ENCODE measurements at regions of chr7 and their contacts with region 1.

Region 1: DNA sequence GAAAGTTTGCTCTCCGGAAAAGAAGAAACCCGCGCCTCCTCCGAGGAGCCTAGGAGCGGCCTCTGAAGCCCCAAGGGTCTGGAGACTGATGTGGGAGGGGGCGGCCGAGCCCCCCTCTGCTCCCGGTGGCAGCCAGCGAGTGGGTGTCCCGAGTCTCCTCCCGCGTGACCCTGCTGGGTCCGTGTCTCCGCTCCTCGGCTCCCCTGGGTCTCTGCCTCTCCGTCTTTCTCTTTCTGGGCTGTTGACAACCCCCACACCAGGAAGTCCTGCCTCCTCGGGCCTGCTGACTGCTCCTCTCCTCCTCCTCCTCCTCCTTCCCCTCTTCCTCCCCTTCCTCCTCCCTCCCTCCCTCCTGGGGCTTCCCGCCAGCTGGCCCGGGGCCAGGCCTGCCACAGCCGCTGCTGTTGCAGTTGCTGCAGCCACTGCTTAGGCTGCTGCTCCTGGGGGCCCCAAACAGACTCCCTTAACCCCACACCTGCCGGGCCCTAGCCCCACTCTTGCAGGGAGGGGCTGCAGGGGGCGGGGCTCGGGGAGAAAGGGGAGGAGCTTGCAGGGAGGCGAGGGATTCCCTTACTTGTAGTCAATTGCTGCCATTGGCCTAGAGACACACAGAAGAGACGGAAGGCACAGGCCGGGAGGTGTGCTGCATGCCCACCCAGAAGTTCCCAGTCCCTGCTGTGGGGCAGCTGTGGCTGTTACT is at the start of gene TSC22D4:
- DNase-seq: peak; percentile 92
- ATAC-seq: peak; percentile 70
- H3K4me3 ChIP-seq: peak within 1 kb of the TSS; percentile 90 to 99 (median 96)
- H3K4me3 Mint-ChIP-seq: peak within 1 kb of the TSS; percentile 97
- H3K27ac ChIP-seq: peak within 1 kb of the TSS; percentile 72 to 89
- H3K27ac Mint-ChIP-seq: peak within 1 kb of the TSS; percentile 91
- H3K4me1 ChIP-seq: peaks cover 34 to 51% of the 10 kb centered on the region in 2 donors
- H3K4me1 Mint-ChIP-seq: peaks cover 37% of the 10 kb centered on the region
- H3K27me3 ChIP-seq: no peaks in the 10 kb centered on the region
- H3K27me3 Mint-ChIP-seq: no peaks in the 10 kb centered on the region
- CTCF ChIP-seq: no peak
- total RNA-seq, gene TSC22D4: 92.8 and 95.0 TPM in 2 replicates

Region 2: DNA sequence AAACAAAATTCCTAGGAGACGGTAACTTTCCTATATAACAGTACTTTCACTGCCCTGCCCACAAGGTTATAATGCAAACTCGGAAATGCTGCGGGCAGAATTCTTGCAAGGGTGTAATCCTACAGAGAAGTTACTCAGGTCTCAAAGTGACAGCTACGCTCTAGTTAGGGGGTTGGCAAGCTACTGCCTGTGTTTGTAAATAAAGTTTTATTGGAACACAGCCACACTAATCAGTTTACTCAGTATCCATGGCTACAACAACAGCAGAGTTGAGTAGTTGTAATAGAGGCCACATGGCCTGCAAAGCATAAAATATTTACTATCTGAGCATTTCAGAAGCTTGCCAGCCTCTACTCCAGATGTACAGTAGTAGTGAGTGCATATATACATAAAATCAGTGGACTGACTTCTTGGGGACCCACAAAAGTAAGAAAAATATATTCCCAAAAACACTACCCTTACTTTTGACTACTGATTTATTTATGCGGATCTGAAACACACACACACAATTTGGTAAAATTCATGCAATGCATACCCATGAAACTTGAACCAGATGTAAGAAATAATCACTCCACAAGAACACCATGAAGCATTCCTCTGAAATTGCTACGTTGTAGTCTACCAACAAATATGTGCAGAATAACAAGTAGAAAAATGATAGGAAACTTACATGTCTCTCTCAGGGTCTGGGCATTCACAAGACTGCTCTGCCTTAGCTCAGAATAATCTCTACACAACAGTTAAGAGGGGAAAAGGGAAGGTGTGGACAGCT is 1388.2 kb before region 1 on chr7:
- CTCF ChIA-PET with region 1: no interaction called
- POLR2A ChIA-PET with region 1: no interaction called
- intact Hi-C with region 1: no loop called
- DNase-seq: no peak
- ATAC-seq: no peak
- H3K4me3 ChIP-seq: no peak overlapping the region
- H3K4me3 Mint-ChIP-seq: no peak overlapping the region
- H3K27ac ChIP-seq: no peak overlapping the region
- H3K27ac Mint-ChIP-seq: no peak overlapping the region
- H3K4me1 ChIP-seq: no peaks in the 10 kb centered on the region
- H3K4me1 Mint-ChIP-seq: peaks cover 9% of the 10 kb centered on the region
- H3K27me3 ChIP-seq: no peaks in the 10 kb centered on the region
- H3K27me3 Mint-ChIP-seq: no peaks in the 10 kb centered on the region
- CTCF ChIP-seq: no peak

Region 3: GRCh38 chr7:99990460-99990852 is 488.7 kb before region 1 on chr7:
- CTCF ChIA-PET with region 1: interaction called, 3 read pairs
- POLR2A ChIA-PET with region 1: interaction called, 10 read pairs
- intact Hi-C with region 1: no loop called
- DNase-seq: no peak
- ATAC-seq: no peak
- H3K4me3 ChIP-seq: no peak overlapping the region
- H3K4me3 Mint-ChIP-seq: no peak overlapping the region
- H3K27ac ChIP-seq: no peak overlapping the region
- H3K27ac Mint-ChIP-seq: no peak overlapping the region
- H3K4me1 ChIP-seq: peaks cover 0 to 4% of the 10 kb centered on the region in 2 donors
- H3K4me1 Mint-ChIP-seq: peaks cover 3% of the 10 kb centered on the region
- H3K27me3 ChIP-seq: peaks cover 0 to 8% (median 0%) of the 10 kb centered on the region in 4 experiments
- H3K27me3 Mint-ChIP-seq: peaks cover 24% of the 10 kb centered on the region
- CTCF ChIP-seq: no peak

Region 4: GRCh38 chr7:100003711-100004661 is 475.1 kb before region 1 on chr7:
- CTCF ChIA-PET with region 1: no interaction called
- POLR2A ChIA-PET with region 1: no interaction called
- intact Hi-C with region 1: no loop called
- DNase-seq: no peak
- ATAC-seq: no peak
- H3K4me3 ChIP-seq: no peak overlapping the region
- H3K4me3 Mint-ChIP-seq: no peak overlapping the region
- H3K27ac ChIP-seq: no peak overlapping the region
- H3K27ac Mint-ChIP-seq: no peak overlapping the region
- H3K4me1 ChIP-seq: no peaks in the 10 kb centered on the region
- H3K4me1 Mint-ChIP-seq: no peaks in the 10 kb centered on the region
- H3K27me3 ChIP-seq: no peaks in the 10 kb centered on the region
- H3K27me3 Mint-ChIP-seq: peaks cover 5% of the 10 kb centered on the region
- CTCF ChIP-seq: no peak

Region 5: GRCh38 chr7:100435401-100436304 is 43.5 kb before region 1 on chr7:
- CTCF ChIA-PET with region 1: interaction called, 9 read pairs
- POLR2A ChIA-PET with region 1: interaction called, 7 read pairs
- intact Hi-C with region 1: loop called (anchors 2 kb)
- DNase-seq: peak; percentile 81
- ATAC-seq: peak; percentile 28
- H3K4me3 ChIP-seq: peak overlapping the region; percentile 39 to 96 (median 81)
- H3K4me3 Mint-ChIP-seq: peak overlapping the region; percentile 98
- H3K27ac ChIP-seq: peak overlapping the region; percentile 87 to 91
- H3K27ac Mint-ChIP-seq: peak overlapping the region; percentile 99
- H3K4me1 ChIP-seq: peaks cover 26 to 46% of the 10 kb centered on the region in 2 donors
- H3K4me1 Mint-ChIP-seq: peaks cover 50% of the 10 kb centered on the region
- H3K27me3 ChIP-seq: no peaks in the 10 kb centered on the region
- H3K27me3 Mint-ChIP-seq: no peaks in the 10 kb centered on the region
- CTCF ChIP-seq: no peak

Region 6: DNA sequence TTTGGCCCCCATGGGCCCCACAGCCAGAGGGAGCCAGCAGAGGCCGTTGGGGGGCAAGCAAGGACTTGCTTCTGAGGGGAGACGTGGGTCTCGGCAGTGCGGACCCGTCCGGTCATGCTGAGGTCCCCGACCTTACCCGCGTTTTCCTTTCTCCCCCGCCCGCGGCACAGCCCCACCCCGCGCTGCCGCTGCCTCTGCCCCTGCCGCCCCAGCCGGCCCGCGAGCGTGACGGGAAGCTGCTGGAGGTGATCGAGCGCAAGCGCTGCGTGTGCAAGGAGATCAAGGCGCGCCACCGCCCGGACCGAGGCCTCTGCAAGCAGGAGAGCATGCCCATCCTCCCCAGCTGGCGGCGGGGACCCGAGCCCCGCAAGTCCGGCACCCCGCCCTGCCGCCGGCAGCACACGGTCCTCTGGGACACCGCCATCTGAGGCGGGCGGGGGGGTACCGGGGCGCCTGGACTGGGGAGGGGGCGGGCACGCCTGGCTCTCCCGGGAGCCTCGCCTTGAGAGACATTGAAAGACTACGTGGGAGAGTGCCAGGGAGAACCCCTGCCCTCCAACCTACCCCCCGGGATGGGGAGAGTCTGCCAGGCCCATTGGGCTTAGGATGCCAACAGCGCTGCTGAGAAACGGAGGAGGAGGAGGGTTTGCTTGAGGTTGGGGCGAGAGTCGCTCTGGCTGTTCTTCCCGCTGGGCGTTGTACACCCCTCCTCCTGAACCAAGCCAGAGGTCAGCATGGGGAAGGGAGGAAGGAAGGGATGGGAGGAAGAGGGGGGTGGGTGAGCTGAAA is 14.6 kb after region 1 on chr7:
- CTCF ChIA-PET with region 1: interaction called, 11 read pairs
- POLR2A ChIA-PET with region 1: no interaction called
- intact Hi-C with region 1: no loop called
- DNase-seq: peak; percentile 58
- ATAC-seq: peak; percentile 79
- H3K4me3 ChIP-seq: peak overlapping the region in 3 of 5 experiments; percentile 11 to 50 (median 33)
- H3K4me3 Mint-ChIP-seq: peak overlapping the region; percentile 64
- H3K27ac ChIP-seq: no peak overlapping the region
- H3K27ac Mint-ChIP-seq: no peak overlapping the region
- H3K4me1 ChIP-seq: peaks cover 7 to 13% of the 10 kb centered on the region in 2 donors
- H3K4me1 Mint-ChIP-seq: peaks cover 11% of the 10 kb centered on the region
- H3K27me3 ChIP-seq: peaks cover 0 to 41% (median 9%) of the 10 kb centered on the region in 4 experiments
- H3K27me3 Mint-ChIP-seq: peaks cover 32% of the 10 kb centered on the region
- CTCF ChIP-seq: no peak

Region 7: DNA sequence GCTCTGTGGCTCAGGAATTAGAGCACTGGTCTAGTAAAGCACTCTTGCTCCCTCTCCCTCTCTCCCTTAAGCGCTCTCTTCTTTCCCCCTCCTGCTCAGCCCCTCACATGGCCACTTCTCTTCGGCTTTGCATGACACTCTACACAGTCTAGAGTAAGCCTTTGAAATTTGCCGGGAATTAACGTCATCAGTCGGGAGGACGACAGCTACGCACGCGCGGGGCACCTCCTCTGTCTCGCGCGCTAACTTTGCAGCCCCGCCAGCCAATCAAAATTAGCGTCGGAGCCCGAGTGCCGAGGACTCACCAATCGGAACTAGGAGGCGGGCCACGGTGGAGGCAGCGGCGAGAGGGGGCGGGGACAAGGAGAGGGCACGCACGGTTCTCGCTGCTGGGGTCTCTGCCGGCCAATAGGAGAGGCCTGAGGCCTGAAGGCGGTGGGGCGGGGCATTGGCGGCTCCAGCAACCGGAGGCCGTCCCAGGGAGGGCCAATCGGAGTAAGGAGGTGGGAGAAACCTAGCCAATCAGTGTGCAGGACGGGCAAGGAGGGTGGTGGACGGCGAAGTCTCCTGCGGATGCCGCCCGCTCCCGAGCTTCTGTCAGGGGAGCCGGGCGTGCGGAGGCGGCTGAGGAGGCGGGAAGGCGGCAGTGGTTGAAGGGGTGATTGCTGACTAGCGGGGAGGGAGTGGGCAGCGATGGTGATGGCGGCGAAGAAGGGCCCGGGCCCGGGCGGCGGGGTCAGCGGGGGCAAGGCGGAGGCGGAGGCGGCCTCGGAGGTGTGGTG is 59.7 kb after region 1 on chr7 and contains the start of gene AGFG2:
- CTCF ChIA-PET with region 1: interaction called, 6 read pairs
- POLR2A ChIA-PET with region 1: interaction called, 3 read pairs
- intact Hi-C with region 1: loop called (anchors 1 kb)
- DNase-seq: peak; percentile 100
- ATAC-seq: peak; percentile 97
- H3K4me3 ChIP-seq: peak within 1 kb of the TSS; percentile 62 to 84 (median 72)
- H3K4me3 Mint-ChIP-seq: peak within 1 kb of the TSS; percentile 91
- H3K27ac ChIP-seq: peak within 1 kb of the TSS in 1 of 2 donors; percentile 42
- H3K27ac Mint-ChIP-seq: peak within 1 kb of the TSS; percentile 76
- H3K4me1 ChIP-seq: peaks cover 14 to 23% of the 10 kb centered on the region in 2 donors
- H3K4me1 Mint-ChIP-seq: peaks cover 36% of the 10 kb centered on the region
- H3K27me3 ChIP-seq: no peaks in the 10 kb centered on the region
- H3K27me3 Mint-ChIP-seq: no peaks in the 10 kb centered on the region
- CTCF ChIP-seq: no peak
- total RNA-seq, gene AGFG2: 11.0 and 11.6 TPM in 2 replicates

Measured in B cell (primary cell).